Motor neuron (in vitro differentiated cells): ENCODE measurements at regions of chr9 and their contacts with region 1.

Region 1: DNA sequence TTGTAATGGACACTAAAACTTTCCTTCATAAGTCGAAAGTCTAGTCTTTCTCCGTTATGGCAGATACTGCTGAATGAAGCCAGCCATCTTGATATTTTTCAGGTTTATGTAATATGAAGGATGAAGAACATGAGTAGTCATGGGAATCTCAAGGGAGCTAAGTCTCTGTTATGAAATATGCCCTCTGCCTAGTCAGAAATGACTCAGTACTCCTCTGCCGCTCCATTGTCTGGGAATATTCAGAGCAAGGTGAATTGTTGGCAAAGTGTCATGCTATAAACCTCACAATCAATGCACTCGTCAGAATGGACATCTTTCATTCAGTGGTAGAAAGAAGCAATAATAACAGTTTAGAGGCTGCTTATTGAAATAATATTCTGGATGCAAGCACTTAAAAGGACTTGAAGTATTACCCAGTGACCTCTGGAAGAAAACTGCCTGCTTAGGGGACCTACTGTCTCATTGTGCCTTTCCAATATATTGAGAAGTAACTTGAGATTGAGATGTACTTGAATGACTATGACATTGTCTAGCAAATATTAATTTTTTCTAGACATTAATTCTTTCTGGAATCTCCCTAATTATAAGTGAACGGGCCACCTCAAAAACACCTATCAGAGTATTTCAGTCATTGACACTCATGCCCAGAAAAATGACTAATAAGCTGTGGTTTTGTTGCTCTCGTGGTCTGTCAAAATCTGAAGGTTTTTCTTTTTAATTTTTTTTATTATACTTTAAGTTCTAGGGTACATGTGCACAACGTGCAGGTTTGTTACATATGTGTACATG is 1011.5 kb upstream of the ACO1 start:
- ATAC-seq: peak in 4 of 8 experiments; percentile 18 to 70 (median 52)
- H3K4me3 ChIP-seq: no peak overlapping the region
- H3K27ac ChIP-seq: no peak overlapping the region
- H3K4me1 ChIP-seq: peaks cover 0 to 6% of the 10 kb centered on the region in 2 donors

Region 2: DNA sequence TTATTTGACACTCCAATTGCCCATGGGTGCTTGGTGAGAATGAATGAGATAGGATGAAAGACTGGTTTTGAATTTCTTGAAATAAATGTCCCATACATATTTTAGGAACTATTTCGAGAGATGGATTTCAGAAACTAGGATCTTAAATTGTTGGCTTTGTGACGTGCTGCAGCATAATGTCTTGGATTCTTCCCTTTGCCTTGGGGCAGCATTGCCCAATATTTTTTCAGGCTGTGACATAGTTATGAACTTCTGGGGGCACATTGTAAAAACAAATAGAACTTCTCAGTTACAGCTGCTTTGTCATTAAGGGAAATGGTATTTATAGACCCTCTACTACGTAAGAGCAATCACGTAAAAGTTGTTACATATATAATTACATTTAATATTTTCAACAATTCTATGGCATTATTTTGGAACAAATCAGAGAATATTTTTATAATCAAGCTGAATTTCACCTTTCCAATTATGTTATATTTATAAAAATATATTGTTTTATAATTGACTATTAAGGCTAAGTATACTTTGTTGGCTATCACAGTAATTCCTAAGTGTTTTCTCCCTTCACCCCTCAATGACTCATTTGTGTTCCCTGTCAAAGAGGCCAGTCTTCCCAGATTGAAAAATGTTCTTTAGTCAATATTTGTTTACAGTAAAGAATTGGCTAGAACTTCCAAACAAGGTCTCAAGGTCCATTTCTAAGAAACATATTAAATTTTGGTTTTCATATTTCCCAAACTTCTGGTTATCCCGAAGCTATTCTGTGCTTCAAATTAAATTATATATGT is 376.8 kb before region 1 on chr9:
- in situ Hi-C with region 1: no loop called
- ATAC-seq: no peak
- H3K4me3 ChIP-seq: no peak overlapping the region
- H3K27ac ChIP-seq: no peak overlapping the region
- H3K4me1 ChIP-seq: no peaks in the 10 kb centered on the region

Region 3: DNA sequence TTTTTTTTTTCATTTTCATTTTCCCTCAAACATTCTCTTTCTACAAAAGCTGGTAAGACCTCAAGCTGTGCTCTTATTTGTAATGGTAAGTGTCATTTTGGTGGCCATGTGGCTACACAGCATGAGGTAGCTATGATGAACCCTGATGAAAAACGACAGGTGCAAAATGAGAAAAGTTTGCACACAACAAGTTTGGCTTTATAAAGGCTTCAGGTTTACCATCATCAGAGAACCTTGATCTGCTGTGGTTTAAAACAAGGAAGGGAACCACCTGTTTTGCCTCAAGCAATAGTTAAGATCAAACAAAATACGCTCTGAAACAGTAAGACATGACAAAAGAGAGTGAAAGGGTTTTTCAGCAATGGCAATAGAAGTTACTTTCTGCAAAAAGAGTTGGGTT is 113.2 kb before region 1 on chr9:
- in situ Hi-C with region 1: loop called in 1 of 9 experiments (anchors 25 kb)
- ATAC-seq: no peak
- H3K4me3 ChIP-seq: no peak overlapping the region
- H3K27ac ChIP-seq: no peak overlapping the region
- H3K4me1 ChIP-seq: no peaks in the 10 kb centered on the region

Region 4: DNA sequence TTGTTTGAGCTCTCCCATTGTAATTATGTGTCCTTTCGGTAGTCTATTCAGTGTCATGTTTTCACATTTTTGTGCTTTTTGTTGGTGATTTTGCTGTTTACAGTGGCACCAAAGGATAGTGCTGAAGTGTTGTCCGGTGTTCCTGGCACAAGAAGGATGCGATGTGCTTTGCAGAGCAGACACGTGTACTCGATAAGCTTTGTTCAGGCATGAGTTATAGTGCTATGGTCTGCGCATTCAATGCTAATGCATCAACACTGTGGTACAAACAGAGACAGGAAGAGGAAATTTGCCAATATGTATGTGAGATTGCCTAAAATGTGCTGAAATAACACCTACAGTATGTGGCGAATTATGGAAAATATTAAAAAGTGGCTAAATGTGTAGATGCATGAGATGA is 98.0 kb after region 1 on chr9:
- in situ Hi-C with region 1: loop called in 1 of 9 experiments (anchors 25 kb)
- ATAC-seq: peak in 5 of 8 experiments; percentile 32 to 96 (median 40)
- H3K4me3 ChIP-seq: no peak overlapping the region
- H3K27ac ChIP-seq: no peak overlapping the region
- H3K4me1 ChIP-seq: no peaks in the 10 kb centered on the region